ENCODE measurements at regions of chr5 and their contacts with region 1.

Region 1: DNA sequence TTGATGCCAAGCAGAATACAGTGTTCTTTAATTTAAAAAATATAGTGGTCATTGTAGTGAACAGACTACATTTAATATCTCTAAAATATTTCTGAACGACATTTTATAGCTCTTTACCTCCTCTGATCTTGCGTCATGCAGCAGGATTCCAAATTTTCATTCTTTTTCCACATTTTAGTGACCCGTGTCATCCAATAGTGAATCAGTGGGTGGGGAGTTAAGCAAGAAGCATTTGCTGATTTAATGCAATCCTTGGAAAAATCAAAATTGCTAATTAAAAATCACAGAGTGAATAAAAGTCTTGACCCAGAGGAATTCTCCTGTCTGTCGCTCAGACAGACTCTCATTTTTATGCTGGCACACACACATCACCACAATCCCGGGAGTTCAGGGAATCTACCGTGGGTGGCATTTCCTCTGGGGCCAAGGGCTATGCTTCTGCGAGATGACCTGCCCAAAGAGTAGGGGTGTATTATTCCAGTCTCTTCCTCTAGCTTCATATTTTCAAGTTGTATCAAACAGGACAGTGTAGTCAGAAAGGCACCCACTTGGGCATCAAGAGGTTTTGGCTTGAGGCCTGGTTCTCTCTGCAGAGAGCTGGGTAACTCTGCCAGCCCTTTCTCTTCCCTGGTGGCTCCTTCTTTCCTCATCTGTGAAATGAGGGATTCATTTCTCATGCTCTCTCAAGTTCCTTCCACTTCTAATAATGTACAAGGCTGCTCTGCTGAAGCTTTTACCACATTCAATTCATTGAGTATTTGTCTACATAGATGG is 24.8 kb upstream of the OTP start:
- DNase-seq: no peak
- CTCF ChIP-seq: no peak

Region 2: DNA sequence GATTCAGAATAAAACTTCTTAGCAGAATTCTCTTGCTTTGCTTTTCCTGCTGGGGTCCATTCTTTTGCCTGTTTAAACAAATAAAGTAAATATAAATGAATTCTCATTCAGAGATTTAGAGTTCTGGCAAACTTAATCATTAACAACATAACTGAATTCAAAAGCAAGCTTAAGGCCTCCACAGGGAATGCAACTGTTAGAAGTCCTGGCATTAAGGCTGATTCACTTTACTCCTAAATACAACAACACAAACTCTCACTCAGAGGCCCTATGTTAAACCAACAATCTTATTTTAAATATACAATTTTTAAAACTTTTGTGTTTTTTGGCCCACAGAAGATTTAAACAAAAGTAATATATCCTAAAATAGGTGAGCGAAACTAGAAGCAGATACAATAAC is 452.9 kb after region 1 on chr5:
- in situ Hi-C with region 1: no loop called
- DNase-seq: no peak
- CTCF ChIP-seq: no peak

Region 3: DNA sequence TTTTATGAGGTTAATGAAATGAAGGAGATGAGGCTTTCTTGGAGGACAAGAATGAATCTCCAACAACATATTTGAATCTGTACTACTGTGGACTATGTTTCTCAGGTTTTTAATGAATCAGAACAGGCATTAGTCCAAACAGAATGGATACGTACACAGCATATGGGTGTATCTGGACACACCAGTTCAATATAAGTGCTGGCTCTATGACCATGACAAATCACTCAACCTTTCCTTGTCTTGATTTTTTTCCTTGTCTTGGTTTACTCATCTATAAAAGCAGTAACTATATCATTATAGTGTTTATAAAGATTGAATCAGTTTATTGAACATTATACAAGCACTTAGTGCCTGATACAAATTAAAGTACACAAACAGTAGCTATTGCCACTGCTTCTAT is 527.1 kb after region 1 on chr5:
- in situ Hi-C with region 1: no loop called
- DNase-seq: no peak
- CTCF ChIP-seq: no peak

Region 4: DNA sequence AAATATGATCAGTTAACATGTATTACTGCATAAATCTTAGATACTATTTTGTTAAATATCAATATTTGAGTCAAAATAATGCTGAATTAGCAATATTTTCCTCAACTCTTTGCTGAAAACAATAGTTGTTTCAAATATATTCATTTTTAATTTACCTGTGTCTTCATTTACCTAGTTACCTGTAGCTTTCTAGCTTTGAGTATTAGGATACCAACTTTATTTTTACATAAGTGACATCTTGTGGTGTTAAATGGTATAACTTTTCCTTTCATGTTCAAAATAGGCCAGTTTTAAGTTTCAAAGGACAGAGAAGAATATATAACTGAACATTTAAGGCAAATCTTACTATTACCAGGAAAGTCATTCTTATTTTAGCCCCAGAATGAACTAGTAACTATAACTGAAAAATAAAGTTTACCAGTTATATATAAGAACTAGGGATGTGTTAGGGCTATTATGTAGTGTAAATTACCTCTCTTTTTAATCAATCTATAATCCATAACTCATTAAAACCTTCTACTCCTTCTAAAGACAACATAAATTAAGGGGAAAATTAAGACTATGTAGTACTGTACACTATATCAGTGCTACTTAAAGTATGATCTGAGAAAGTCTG is 605.9 kb after region 1 on chr5:
- in situ Hi-C with region 1: loop called (anchors 25 kb)
- DNase-seq: peak; percentile 15
- CTCF ChIP-seq: peak; percentile 51

Measured in GM13977 (cell line).